Activated T-helper 1 cell treated with anti-CD3 and anti-CD28 coated beads, Interleukin-12 subunit alpha, Interleukin-12 subunit beta, Interleukin-2, Interleukin-4 antibody, amounts not matched to agents 30 ng/mL and 10 ng/mL and 1 ng/mL, durations not matched to agents 14 hours and 24 hours and 36 hours (primary cell): ENCODE measurements at regions of chr2 and their contacts with region 1.

Region 1: GRCh38 chr2:151238527-151239487 is 22.9 kb downstream of the RBM43 start:
- DNase-seq: no peak
- H3K4me3 Mint-ChIP-seq: no peak overlapping the region
- H3K27ac Mint-ChIP-seq: no peak overlapping the region
- H3K4me1 Mint-ChIP-seq: no peaks in the 10 kb centered on the region
- H3K27me3 Mint-ChIP-seq: peaks cover 9% of the 10 kb centered on the region

Region 2: GRCh38 chr2:150487537-150488429 is 751.0 kb before region 1 on chr2 and contains the start of gene RND3:
- intact Hi-C with region 1: loop called (anchors 2 kb)
- DNase-seq: peak; percentile 34
- H3K4me3 Mint-ChIP-seq: peak within 1 kb of the TSS; percentile 66
- H3K27ac Mint-ChIP-seq: no peak within 1 kb of the TSS
- H3K4me1 Mint-ChIP-seq: peaks cover 13% of the 10 kb centered on the region
- H3K27me3 Mint-ChIP-seq: peaks cover 59% of the 10 kb centered on the region
- total RNA-seq, gene RND3: not detected in 2 replicates

Region 3: DNA sequence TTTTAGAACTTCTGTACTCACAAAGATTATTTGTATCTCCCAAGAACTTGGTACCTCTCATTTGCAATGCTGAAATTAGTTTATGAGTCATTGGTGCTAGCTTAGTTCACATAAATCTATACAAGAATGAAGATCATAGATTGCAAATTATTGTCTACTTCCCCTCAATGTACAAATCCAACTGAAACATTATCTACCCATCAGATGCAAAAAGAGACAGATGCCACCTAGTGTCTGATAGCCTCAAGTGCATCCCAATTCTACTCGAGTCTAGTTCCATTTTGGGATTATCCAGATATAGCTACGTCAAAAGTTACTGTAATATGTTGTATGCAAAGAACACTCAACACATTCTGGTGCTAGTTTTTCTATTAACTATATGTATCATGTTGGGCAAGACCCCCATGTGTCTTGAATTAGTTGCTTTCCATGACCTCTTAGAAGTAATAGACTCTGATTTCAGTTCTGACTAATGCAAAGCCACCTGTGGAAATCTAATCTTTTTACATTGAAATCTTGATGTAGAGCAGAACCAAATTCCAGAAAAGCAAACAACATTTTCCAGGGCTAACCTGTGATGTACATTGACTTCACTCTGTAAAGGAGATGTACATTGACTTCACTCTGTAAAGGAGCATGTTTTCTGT is 187.1 kb before region 1 on chr2:
- intact Hi-C with region 1: loop called (anchors 10 kb)
- DNase-seq: no peak
- H3K4me3 Mint-ChIP-seq: no peak overlapping the region
- H3K27ac Mint-ChIP-seq: no peak overlapping the region
- H3K4me1 Mint-ChIP-seq: no peaks in the 10 kb centered on the region
- H3K27me3 Mint-ChIP-seq: peaks cover 1% of the 10 kb centered on the region